Activated T-helper 2 cell treated with anti-CD3 and anti-CD28 coated beads, Interferon-gamma antibody, Interleukin-2, Interleukin-4, amounts not matched to agents 10 μg/mL and 5 μg/mL and 100 μg/mL, durations not matched to agents 14 hours and 24 hours and 36 hours (primary cell): ENCODE measurements at regions of chr18 and their contacts with region 1.

Region 1: GRCh38 chr18:50287441-50288347 is at the start of gene CXXC1:
- DNase-seq: peak; percentile 96
- H3K4me3 Mint-ChIP-seq: peak within 1 kb of the TSS; percentile 93
- H3K27ac Mint-ChIP-seq: peak within 1 kb of the TSS; percentile 89
- H3K4me1 Mint-ChIP-seq: peaks cover 20% of the 10 kb centered on the region
- H3K27me3 Mint-ChIP-seq: peaks cover 2% of the 10 kb centered on the region
- total RNA-seq, gene CXXC1: 94.9 and 101 TPM in 2 replicates

Region 2: DNA sequence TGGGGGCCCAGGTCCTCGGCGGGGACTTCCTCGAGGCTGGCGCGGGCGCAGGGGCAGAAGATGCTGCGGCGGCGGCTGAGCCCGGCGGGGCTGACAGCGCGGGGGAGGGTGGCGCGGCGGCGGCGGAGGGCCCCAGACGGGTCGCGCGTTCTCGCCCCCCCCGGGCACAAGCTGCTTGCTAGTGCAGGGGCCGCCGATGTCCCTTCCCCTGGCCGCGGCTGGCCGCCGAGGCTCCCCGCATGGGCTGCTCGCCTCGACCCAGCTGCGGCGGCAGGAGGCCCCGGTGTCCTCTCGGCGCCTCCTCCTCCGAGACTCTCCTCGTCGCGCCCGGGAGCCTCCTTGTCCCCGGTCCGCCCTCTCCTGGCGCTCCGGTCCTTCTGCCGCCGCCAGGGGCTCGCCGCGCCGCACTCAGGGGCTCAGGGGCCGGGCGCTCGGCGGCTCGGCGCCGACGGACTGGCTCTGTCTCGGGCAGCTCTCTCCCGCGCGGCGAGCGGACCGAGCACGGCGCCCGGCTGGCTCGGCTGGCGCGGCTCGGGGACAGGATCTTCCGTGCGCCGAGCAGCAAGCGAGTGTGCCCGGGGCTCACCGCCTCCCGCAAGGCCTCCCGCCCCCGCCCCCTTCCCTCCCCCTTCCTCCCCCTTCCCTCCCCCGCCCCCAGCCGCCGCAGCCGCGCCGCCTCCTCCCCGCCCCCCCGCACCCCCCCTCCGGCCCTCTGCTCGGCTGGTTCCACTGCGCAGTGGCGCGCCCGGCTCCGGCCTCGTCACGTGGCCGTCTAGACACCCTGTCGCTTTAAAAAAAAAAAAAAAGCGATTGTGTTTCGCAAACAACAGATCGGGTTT is 1336.0 kb before region 1 on chr18:
- intact Hi-C with region 1: loop called (anchors 10 kb)
- DNase-seq: peak; percentile 67
- H3K4me3 Mint-ChIP-seq: peak overlapping the region; percentile 93
- H3K27ac Mint-ChIP-seq: peak overlapping the region; percentile 94
- H3K4me1 Mint-ChIP-seq: peaks cover 40% of the 10 kb centered on the region
- H3K27me3 Mint-ChIP-seq: peaks cover 9% of the 10 kb centered on the region

Region 3: GRCh38 chr18:49813319-49814146 is 474.2 kb before region 1 on chr18 and contains the start of gene ACAA2:
- intact Hi-C with region 1: loop called (anchors 10 kb)
- DNase-seq: peak; percentile 76
- H3K4me3 Mint-ChIP-seq: peak within 1 kb of the TSS; percentile 89
- H3K27ac Mint-ChIP-seq: peak within 1 kb of the TSS; percentile 98
- H3K4me1 Mint-ChIP-seq: peaks cover 53% of the 10 kb centered on the region
- H3K27me3 Mint-ChIP-seq: no peaks in the 10 kb centered on the region
- total RNA-seq, gene ACAA2: 82.9 and 85.7 TPM in 2 replicates

Region 4: GRCh38 chr18:50266248-50266704 is 21.4 kb before region 1 on chr18 and contains the start of gene CFAP53:
- intact Hi-C with region 1: loop called (anchors 1 kb)
- DNase-seq: peak; percentile 79
- H3K4me3 Mint-ChIP-seq: peak within 1 kb of the TSS; percentile 80
- H3K27ac Mint-ChIP-seq: peak within 1 kb of the TSS; percentile 62
- H3K4me1 Mint-ChIP-seq: peaks cover 11% of the 10 kb centered on the region
- H3K27me3 Mint-ChIP-seq: peaks cover 7% of the 10 kb centered on the region
- total RNA-seq, gene CFAP53: 0.25 and 0.51 TPM in 2 replicates

Region 5: GRCh38 chr18:50307738-50308470 is 20.2 kb after region 1 on chr18:
- intact Hi-C with region 1: loop called (anchors 1 kb)
- DNase-seq: peak; percentile 87
- H3K4me3 Mint-ChIP-seq: peak overlapping the region; percentile 89
- H3K27ac Mint-ChIP-seq: peak overlapping the region; percentile 57
- H3K4me1 Mint-ChIP-seq: peaks cover 21% of the 10 kb centered on the region
- H3K27me3 Mint-ChIP-seq: peaks cover 17% of the 10 kb centered on the region

Region 6: GRCh38 chr18:50356036-50356945 is 68.6 kb after region 1 on chr18:
- intact Hi-C with region 1: loop called (anchors 5 kb)
- DNase-seq: no peak
- H3K4me3 Mint-ChIP-seq: no peak overlapping the region
- H3K27ac Mint-ChIP-seq: peak overlapping the region; percentile 45
- H3K4me1 Mint-ChIP-seq: peaks cover 12% of the 10 kb centered on the region
- H3K27me3 Mint-ChIP-seq: peaks cover 32% of the 10 kb centered on the region